Activated naive CD4-positive, alpha-beta T cell treated with anti-CD3 and anti-CD28 coated beads for 36 hours (primary cell): ENCODE measurements at regions of chr4 and their contacts with region 1.

Region 1: GRCh38 chr4:153528705-153529485 is 62.7 kb downstream of the TMEM131L start:
- DNase-seq: no peak
- H3K4me3 Mint-ChIP-seq: peak overlapping the region; percentile 60
- H3K27ac Mint-ChIP-seq: peak overlapping the region; percentile 97
- H3K4me1 Mint-ChIP-seq: peaks cover 91% of the 10 kb centered on the region
- H3K27me3 Mint-ChIP-seq: no peaks in the 10 kb centered on the region

Region 2: DNA sequence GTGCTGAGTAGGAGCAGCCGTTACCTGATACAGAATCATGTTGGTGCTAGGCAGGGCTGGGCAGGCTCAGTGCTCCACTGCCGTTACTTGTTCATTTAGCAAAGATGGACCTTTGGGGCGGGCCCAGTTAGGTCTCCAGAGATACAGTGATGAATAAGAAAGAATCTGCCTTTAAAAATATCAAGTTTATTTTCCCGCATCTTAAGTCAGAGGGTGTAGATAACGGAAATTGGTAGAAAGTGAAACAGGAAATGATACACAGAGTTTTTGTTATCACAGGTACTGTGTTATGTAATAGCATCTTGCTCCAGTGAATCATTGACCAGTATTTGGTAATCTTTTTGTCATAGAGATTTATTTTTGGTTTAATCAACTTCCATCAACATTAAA is 57.2 kb before region 1 on chr4:
- CTCF ChIA-PET with region 1: interaction called, 30 read pairs
- intact Hi-C with region 1: loop called (anchors 1 kb)
- DNase-seq: peak; percentile 85
- H3K4me3 Mint-ChIP-seq: peak overlapping the region; percentile 95
- H3K27ac Mint-ChIP-seq: peak overlapping the region; percentile 96
- H3K4me1 Mint-ChIP-seq: peaks cover 70% of the 10 kb centered on the region
- H3K27me3 Mint-ChIP-seq: no peaks in the 10 kb centered on the region

Region 3: GRCh38 chr4:153497988-153498967 is 30.6 kb before region 1 on chr4:
- CTCF ChIA-PET with region 1: interaction called, 6 read pairs
- intact Hi-C with region 1: loop called (anchors 1 kb)
- DNase-seq: peak; percentile 33
- H3K4me3 Mint-ChIP-seq: peak overlapping the region; percentile 70
- H3K27ac Mint-ChIP-seq: peak overlapping the region; percentile 98
- H3K4me1 Mint-ChIP-seq: peaks cover 91% of the 10 kb centered on the region
- H3K27me3 Mint-ChIP-seq: no peaks in the 10 kb centered on the region

Region 4: DNA sequence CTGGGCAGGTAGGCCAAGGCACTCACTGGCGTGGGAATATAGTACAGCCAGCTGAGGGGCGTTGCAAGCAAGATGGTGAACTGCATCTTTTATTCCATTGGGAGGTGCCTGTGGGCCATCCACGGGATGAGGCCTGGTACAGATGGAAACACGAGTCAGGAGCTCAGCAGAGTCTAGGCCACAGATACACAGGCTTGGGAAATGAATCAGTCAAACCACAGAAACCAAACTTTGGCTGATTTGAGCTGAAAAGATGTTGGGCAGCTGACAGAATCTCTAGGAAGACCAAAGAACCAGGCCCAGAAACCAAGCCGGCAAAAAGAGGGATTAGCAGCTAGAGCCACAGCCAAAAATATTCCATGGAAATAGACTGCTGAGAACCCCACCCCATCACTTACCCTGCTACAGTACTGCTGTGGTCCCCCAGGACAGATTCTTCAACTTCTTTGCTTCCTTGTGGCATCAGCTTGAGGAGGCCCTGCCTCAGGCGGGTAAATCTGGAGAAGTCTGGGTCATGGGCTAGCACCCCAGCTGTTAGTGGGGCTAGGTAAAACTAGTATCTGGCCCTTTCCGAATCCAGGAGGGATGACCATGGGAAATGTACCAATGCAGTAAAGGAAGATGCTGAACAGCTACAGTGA is 12.7 kb after region 1 on chr4:
- CTCF ChIA-PET with region 1: interaction called, 22 read pairs
- intact Hi-C with region 1: loop called (anchors 1 kb)
- DNase-seq: peak; percentile 54
- H3K4me3 Mint-ChIP-seq: no peak overlapping the region
- H3K27ac Mint-ChIP-seq: peak overlapping the region; percentile 27
- H3K4me1 Mint-ChIP-seq: peaks cover 78% of the 10 kb centered on the region
- H3K27me3 Mint-ChIP-seq: no peaks in the 10 kb centered on the region

Region 5: DNA sequence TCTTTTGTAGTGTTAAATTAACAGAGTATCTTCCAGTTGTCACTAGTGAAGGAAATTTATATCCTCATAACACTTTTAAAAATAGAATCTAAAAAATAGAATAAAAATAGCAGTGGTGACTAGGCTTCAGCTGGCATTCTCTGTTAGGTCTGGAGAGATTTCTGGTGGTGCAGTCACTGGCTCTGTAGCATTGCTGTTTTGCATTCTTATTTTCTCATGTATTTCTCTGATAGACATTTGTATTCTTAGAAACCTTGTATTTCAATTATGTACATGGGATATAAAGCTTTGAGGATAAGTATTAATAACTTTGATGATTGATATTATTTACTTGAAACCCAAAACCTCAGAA is 24.9 kb after region 1 on chr4:
- CTCF ChIA-PET with region 1: interaction called, 3 read pairs
- intact Hi-C with region 1: loop called (anchors 2 kb)
- DNase-seq: no peak
- H3K4me3 Mint-ChIP-seq: no peak overlapping the region
- H3K27ac Mint-ChIP-seq: no peak overlapping the region
- H3K4me1 Mint-ChIP-seq: peaks cover 51% of the 10 kb centered on the region
- H3K27me3 Mint-ChIP-seq: no peaks in the 10 kb centered on the region

Region 6: GRCh38 chr4:153573881-153574802 is 45.2 kb after region 1 on chr4:
- CTCF ChIA-PET with region 1: interaction called, 6 read pairs
- intact Hi-C with region 1: loop called (anchors 1 kb)
- DNase-seq: peak; percentile 78
- H3K4me3 Mint-ChIP-seq: no peak overlapping the region
- H3K27ac Mint-ChIP-seq: peak overlapping the region; percentile 74
- H3K4me1 Mint-ChIP-seq: peaks cover 76% of the 10 kb centered on the region
- H3K27me3 Mint-ChIP-seq: no peaks in the 10 kb centered on the region